AG04450 (cell line): ENCODE measurements at regions of chr19 and their contacts with region 1.

Region 1: DNA sequence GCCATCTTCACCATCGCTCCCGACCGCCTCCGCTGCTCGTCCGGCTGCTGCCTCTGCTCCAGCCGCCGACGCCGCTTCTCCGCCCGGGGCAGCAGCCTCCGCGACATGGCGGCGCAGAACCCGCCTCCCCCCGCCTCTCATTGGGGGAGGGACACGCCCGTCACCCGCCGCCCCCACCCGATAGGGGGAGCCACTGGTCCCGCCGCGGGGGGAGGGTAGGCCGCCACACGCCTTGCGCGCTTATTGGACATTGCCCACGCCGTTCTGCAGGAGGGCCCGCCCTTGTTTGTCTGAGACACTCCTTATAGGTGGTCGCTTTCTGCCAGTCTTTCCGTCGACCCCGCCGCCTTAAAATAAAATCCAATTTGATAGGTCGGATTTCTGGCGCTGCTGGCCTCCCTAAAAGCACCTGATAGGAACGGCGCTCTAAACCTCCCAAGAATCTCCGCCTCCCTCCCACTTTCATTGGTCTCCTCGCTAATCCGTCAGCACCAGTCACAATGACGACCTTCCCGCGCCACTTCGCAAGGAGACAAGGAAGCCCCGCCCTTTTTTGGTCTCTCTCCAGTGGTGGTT is at the start of gene HNRNPL:
- DNase-seq: no peak
- H3K4me3 ChIP-seq: peak within 1 kb of the TSS; percentile 67
- H3K27ac ChIP-seq: peak within 1 kb of the TSS; percentile 91
- H3K27me3 ChIP-seq: no peaks in the 10 kb centered on the region
- CTCF ChIP-seq: peak; percentile 54
- polyA plus RNA-seq, gene HNRNPL: 281 and 316 TPM in 2 replicates

Region 2: GRCh38 chr19:38831142-38831605 is 18.8 kb before region 1 on chr19:
- CTCF ChIA-PET with region 1: no interaction called
- POLR2A ChIA-PET with region 1: interaction called, 14 read pairs
- DNase-seq: peak; percentile 82
- H3K4me3 ChIP-seq: peak overlapping the region; percentile 77
- H3K27ac ChIP-seq: peak overlapping the region; percentile 99
- H3K27me3 ChIP-seq: no peaks in the 10 kb centered on the region
- CTCF ChIP-seq: no peak

Region 3: DNA sequence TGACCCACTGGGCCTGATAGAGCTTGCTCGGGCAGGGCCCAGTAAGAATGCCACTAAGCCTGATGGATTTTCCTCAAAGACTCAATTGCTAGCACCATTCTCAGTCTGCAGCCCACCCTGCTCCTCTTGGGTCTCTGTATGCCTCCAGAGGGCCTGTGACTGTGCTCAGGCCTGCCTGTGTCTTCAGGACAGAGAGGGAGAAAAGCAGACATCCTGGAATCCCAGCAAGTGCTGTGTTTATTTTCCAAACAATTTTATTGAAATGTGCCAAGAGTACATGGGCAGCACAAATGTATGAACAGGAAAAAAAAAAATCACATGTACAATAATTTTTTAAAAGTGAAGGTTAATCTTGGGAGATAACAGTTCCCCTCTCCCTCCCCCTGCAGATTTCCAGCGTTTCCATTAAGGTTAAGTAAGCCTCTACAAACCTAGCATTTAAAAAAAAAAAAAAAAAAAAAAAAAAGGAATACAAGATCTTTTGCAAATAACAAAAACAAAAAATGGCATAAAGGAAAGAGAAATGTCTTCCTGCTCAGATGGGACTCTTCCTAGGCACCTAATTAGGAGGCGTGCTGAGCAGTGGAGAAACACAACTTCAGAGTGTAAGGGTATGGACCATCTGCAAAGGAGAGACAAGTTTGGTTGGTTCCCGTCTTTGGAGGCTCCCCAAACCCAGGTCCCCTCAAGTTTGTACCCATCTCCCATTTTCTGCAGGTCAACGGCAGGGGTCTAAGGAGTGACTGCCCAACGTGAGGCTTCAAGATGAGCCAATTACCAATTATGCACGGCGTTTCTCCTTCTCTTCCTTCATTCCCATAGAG is 13.6 kb before region 1 on chr19:
- CTCF ChIA-PET with region 1: no interaction called
- POLR2A ChIA-PET with region 1: interaction called, 14 read pairs
- DNase-seq: no peak
- H3K4me3 ChIP-seq: no peak overlapping the region
- H3K27ac ChIP-seq: peak overlapping the region; percentile 24
- H3K27me3 ChIP-seq: no peaks in the 10 kb centered on the region
- CTCF ChIP-seq: no peak

Region 4: GRCh38 chr19:38953677-38954076 is 103.7 kb after region 1 on chr19:
- CTCF ChIA-PET with region 1: no interaction called
- POLR2A ChIA-PET with region 1: no interaction called
- DNase-seq: no peak
- H3K4me3 ChIP-seq: no peak overlapping the region
- H3K27ac ChIP-seq: no peak overlapping the region
- H3K27me3 ChIP-seq: no peaks in the 10 kb centered on the region
- CTCF ChIP-seq: no peak